ENCODE measurements at regions of chr3 and their contacts with region 1.

Region 1: DNA sequence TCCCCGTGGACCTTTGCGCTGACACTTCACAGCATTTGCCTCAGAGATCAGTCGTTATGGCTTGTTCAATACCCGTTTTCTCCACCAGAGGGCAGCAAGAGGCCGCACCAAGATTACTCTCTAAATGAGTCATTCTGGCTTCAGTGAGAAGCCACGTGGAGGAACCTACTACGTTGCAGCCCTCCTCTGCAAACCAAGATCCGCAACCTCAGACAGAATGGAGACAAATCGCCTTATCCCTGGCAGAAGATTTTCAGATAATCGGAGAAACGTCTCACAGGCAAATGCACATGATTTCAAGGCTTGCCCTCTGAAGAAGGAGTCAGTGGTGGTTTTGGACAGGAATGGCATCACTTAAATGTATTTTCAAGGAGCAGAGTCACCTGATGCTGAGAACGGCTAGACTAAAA is 60.5 kb downstream of the GTPBP8 start:
- DNase-seq: peak; percentile 60 to 89
- ATAC-seq: peak; percentile 81 to 97 (median 96)
- H3K4me3 ChIP-seq: peak overlapping the region in 1 of 10 donors; percentile 17
- H3K27ac ChIP-seq: no peak overlapping the region
- H3K4me1 ChIP-seq: peaks cover 0 to 32% (median 5%) of the 10 kb centered on the region in 9 donors
- H3K27me3 ChIP-seq: no peaks in the 10 kb centered on the region
- CTCF ChIP-seq: peak; percentile 80 to 98 (median 96)

Region 2: GRCh38 chr3:113626503-113627371 is 575.4 kb after region 1 on chr3:
- intact Hi-C with region 1: loop called in 3 of 10 experiments (anchors 5 to 10 kb)
- DNase-seq: peak; percentile 42 to 59
- ATAC-seq: peak; percentile 87 to 95 (median 92)
- H3K4me3 ChIP-seq: peak overlapping the region in 7 of 10 donors; percentile 2 to 35 (median 27)
- H3K27ac ChIP-seq: peak overlapping the region in 3 of 10 donors; percentile 27 to 81 (median 35)
- H3K4me1 ChIP-seq: peaks cover 0 to 20% (median 3%) of the 10 kb centered on the region in 9 donors
- H3K27me3 ChIP-seq: peaks cover 0 to 4% (median 0%) of the 10 kb centered on the region in 7 donors
- CTCF ChIP-seq: peak; percentile 73 to 95 (median 88)